ENCODE measurements at regions of chr1 and their contacts with region 1.

Region 1: DNA sequence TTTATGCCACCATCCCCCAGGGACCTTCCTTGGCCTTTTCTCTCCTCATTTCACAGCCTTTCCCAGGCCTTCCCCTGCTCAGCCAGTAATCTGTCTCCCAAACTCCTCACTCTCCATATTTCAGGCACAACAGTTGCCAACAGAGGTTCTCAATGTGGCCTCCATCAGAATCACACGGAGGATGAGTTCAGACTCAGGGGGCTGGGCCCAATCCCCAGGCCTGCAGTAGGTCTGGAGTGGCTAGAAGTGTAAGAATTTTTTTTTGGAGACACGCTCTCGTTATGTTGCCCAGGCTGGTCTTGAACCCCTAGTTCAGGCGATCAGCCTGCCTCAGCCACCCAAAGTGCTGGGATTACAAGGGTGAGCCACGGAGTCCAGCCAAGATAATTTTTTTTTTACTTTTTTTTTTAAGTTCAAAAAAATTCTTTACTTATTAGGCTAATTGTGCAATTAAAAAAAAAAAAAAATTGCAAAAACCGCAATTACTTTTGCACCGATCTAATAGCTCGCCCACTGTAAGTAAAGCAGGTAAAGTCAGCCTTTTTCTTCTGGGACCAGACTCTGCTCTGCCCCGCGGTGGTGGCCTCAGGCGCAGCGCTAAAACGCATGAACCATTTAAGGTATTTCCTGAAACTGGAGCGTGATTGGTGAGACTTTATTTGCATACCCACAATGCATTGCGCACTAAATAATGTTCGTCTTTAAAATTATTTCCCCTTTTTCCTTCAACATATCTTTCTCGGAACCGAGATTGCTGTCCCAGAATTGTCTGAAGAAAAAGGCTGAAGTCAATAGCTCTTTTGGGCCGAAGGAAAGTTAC is 18.7 kb downstream of the KIAA2013 start:
- DNase-seq: peak; percentile 94
- ATAC-seq: peak; percentile 65
- H3K4me3 Mint-ChIP-seq: peak overlapping the region; percentile 90
- H3K27ac Mint-ChIP-seq: peak overlapping the region; percentile 96
- H3K4me1 Mint-ChIP-seq: peaks cover 29% of the 10 kb centered on the region
- H3K27me3 Mint-ChIP-seq: peaks cover 14% of the 10 kb centered on the region
- CTCF ChIP-seq: peak; percentile 65

Region 2: GRCh38 chr1:11719313-11720032 is 188.0 kb before region 1 on chr1:
- CTCF ChIA-PET with region 1: no interaction called
- POLR2A ChIA-PET with region 1: interaction called, 14 read pairs
- intact Hi-C with region 1: no loop called
- DNase-seq: peak; percentile 93
- ATAC-seq: peak; percentile 87
- H3K4me3 Mint-ChIP-seq: peak overlapping the region; percentile 73
- H3K27ac Mint-ChIP-seq: peak overlapping the region; percentile 91
- H3K4me1 Mint-ChIP-seq: peaks cover 11% of the 10 kb centered on the region
- H3K27me3 Mint-ChIP-seq: no peaks in the 10 kb centered on the region
- CTCF ChIP-seq: peak; percentile 99

Region 3: DNA sequence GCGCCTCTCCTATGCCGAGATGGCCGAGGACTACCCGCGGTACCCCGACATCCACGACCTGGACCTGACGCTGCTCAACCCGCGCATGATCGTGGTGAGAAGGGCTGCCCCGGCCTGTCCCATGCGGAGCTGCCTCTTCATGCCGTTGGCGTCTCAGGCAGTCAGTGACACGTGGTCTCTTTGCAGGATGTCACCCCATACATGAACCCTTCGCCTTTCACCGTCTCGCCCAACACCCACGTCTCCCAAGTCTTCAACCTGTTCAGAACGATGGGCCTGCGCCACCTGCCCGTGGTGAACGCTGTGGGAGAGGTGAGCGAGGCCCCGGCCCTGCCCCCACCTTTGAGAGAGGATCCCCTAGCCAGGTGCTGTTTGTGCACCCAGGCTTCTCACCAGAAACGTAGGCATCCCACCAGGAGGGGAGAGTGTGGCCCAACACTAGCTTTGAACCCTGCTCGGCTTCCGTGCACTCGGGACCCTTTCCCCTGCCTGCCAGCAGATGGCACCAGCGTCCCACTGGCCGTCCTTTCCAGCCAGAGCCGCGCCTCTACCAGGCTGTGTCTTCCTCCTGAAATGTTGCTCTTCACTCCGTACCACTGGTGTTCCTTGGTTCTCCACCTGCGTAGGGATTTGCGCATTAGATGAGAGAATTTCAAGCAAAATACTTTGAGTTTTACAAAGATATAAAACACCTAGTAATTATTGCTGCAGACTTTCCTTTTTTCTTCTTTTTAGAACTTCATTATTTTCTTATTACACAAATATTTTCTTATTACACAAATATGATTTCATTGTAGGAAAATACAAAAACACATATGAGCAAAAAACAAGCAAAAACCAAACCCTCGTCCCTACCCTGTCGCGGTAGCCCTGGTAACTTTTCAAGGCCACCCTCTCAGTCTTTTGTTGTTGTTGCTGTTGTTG is 68.9 kb before region 1 on chr1:
- CTCF ChIA-PET with region 1: interaction called, 7 read pairs
- POLR2A ChIA-PET with region 1: interaction called, 111 read pairs
- intact Hi-C with region 1: no loop called
- DNase-seq: peak; percentile 73
- ATAC-seq: peak; percentile 97
- H3K4me3 Mint-ChIP-seq: no peak overlapping the region
- H3K27ac Mint-ChIP-seq: no peak overlapping the region
- H3K4me1 Mint-ChIP-seq: no peaks in the 10 kb centered on the region
- H3K27me3 Mint-ChIP-seq: no peaks in the 10 kb centered on the region
- CTCF ChIP-seq: peak; percentile 99

Region 4: DNA sequence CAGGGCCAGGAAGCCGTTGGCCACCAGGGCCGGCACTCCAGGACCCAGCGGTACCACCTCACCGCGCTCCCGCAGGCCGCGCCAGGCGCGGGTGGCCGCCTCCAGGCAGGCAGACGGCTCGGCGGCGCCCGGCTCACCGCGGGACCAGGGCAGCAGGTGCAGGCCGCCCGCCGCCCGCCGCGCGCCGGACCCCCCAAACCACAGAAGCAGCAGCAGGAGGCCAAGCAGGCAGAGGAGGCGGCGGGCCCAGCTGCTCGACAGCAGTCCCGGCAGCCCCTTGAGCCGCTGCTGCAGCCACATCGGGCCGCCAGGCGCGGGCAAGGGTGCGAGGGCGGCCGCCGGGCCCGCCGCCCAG is 18.4 kb after region 1 on chr1:
- CTCF ChIA-PET with region 1: no interaction called
- POLR2A ChIA-PET with region 1: interaction called, 395 read pairs
- intact Hi-C with region 1: no loop called
- DNase-seq: no peak
- ATAC-seq: peak; percentile 22
- H3K4me3 Mint-ChIP-seq: peak overlapping the region; percentile 75
- H3K27ac Mint-ChIP-seq: no peak overlapping the region
- H3K4me1 Mint-ChIP-seq: peaks cover 31% of the 10 kb centered on the region
- H3K27me3 Mint-ChIP-seq: no peaks in the 10 kb centered on the region
- CTCF ChIP-seq: no peak

Region 5: DNA sequence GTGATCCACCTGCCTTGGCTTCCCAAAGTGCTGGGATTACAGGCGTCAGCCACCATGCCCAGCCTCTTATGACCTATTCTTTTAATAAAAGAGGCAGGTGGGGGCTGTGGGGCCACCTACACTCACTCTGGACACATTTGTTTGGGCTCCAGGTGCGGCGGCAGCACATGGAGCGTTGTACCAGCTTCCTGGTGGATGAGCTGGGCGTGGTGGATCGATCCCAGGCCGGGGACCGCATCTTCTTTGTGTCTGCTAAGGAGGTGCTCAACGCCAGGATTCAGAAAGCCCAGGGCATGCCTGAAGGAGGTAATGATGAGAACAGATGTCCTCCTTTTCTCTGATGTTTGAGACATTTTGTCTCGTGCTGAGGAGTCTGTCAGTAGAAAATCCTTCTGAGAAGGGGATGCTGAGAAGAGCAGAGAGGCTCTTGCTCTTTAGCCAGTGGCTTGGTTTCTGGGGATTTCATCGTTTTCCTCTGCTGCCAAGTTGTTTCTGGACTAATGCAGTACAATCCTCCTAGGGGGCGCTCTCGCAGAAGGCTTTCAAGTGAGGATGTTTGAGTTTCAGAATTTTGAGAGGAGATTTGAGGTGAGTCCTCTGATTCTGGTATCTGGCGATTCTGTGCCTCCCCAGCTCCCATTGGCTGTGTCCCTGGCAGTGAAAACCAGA is 93.9 kb after region 1 on chr1:
- CTCF ChIA-PET with region 1: no interaction called
- POLR2A ChIA-PET with region 1: interaction called, 11 read pairs
- intact Hi-C with region 1: no loop called
- DNase-seq: peak; percentile 87
- ATAC-seq: peak; percentile 68
- H3K4me3 Mint-ChIP-seq: no peak overlapping the region
- H3K27ac Mint-ChIP-seq: peak overlapping the region; percentile 79
- H3K4me1 Mint-ChIP-seq: no peaks in the 10 kb centered on the region
- H3K27me3 Mint-ChIP-seq: no peaks in the 10 kb centered on the region
- CTCF ChIP-seq: peak; percentile 73

Region 6: DNA sequence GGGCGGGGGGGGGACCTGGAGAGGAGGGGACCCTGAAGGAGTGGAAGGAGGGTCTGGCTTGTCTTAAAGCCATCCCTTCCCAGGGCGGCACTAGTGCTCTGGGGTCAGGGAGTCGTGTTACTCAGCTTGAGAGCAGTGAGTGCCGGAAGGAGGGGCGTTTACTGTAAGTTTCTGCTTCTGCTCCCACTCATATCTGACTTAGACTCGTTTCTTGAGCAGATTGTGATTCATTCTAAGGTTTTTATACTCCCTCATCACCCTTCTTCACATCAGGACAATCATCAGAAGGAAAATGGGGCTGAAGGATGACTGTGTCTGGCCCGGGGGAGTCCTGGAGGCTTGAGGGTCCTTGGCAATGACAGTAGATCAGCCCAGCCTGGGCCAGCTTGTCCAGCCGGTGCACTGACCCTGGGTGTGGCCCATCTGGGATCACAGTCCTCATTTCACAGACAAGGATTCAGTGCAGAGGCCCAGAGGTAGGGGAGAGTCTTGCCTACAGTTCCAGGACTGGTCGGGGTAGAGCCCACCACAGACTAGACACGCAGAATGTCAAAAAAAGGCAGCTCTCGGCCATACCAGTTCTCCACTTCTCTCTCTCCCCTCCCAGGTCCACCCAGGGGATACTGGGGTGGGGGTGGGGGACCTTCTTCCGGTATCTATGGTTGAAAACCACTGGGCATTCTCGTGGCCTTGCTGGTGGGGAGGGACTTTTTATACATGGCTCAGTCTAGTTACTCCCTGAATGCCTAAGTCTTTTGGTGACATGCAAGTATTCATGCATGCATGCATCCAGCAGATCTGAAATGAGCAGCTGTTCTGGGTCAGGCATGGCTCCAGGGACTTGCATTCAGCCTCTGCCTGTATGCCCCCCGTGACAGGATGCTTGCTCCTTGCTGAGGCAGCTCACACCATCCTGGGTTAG is 160.7 kb after region 1 on chr1:
- CTCF ChIA-PET with region 1: no interaction called
- POLR2A ChIA-PET with region 1: interaction called, 43 read pairs
- intact Hi-C with region 1: no loop called
- DNase-seq: peak; percentile 77
- ATAC-seq: peak; percentile 78
- H3K4me3 Mint-ChIP-seq: no peak overlapping the region
- H3K27ac Mint-ChIP-seq: peak overlapping the region; percentile 80
- H3K4me1 Mint-ChIP-seq: peaks cover 47% of the 10 kb centered on the region
- H3K27me3 Mint-ChIP-seq: peaks cover 54% of the 10 kb centered on the region
- CTCF ChIP-seq: no peak

Region 7: GRCh38 chr1:12269351-12269750 is 361.9 kb after region 1 on chr1:
- CTCF ChIA-PET with region 1: no interaction called
- POLR2A ChIA-PET with region 1: no interaction called
- intact Hi-C with region 1: no loop called
- DNase-seq: no peak
- ATAC-seq: no peak
- H3K4me3 Mint-ChIP-seq: no peak overlapping the region
- H3K27ac Mint-ChIP-seq: no peak overlapping the region
- H3K4me1 Mint-ChIP-seq: peaks cover 2% of the 10 kb centered on the region
- H3K27me3 Mint-ChIP-seq: no peaks in the 10 kb centered on the region
- CTCF ChIP-seq: no peak